Spleen (tissue), 13 donors: ENCODE measurements at regions of chr19 and their contacts with region 1.

Region 1: DNA sequence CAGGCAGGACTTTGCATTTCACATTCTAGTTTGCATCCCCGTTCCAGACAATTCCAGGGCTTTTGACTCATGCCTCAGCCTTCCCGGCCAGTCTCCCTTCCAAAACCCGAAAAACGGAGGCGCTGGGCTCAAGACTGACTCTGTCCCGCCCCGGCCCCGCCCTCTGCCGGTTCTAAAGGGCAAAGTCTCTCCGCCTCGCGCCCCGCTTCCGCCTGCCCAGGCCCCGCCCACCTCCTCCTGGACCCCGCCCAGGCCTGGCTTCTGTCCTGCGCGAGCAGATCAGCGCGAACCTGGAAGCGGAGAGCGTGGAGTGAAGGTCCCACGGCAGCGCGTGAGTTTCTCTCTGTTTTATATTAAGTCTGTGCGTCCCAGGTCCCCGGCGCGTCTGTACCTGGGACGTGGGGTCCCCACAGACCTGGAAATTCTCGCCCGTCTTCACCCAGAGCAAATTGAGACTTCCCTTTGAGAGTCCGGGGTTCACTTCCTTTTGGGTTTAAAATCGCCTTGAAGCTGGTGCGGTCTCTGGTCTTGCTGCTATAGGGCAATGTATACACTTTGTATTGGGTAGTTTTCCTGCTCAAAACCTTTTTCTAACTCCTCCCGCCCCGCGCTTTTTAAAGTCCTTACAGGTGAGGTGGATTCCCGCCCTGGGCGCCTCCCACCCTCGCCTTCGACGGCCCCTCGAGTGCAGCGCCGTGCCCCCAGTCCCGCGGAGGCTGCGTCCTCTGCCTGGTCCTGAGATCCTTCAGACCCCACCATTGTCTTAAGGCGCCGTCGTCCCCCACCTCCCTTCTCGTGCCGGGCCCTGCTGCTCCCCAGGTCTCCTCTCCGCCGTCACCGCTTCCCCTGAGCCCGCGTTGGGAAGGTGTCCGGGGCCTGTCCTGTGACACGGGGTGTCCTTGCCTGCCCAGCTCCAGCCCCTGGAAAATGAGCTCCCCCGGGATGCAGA is 31.2 kb downstream of the ZNF701 start:
- DNase-seq: peak; percentile 98
- H3K4me3 ChIP-seq: peak overlapping the region; percentile 64 to 86 (median 74)
- H3K27ac ChIP-seq: peak overlapping the region; percentile 32 to 87 (median 81)
- H3K4me1 ChIP-seq: peaks cover 0 to 31% (median 19%) of the 10 kb centered on the region in 6 donors
- H3K27me3 ChIP-seq: no peaks in the 10 kb centered on the region
- CTCF ChIP-seq: peak in 9 of 11 experiments; percentile 43 to 84 (median 64)
- POLR2A ChIP-seq: no peak

Region 2: GRCh38 chr19:52637718-52638585 is 36.7 kb after region 1 on chr19 and contains the start of gene ZNF83:
- intact Hi-C with region 1: loop called (anchors 5 kb)
- DNase-seq: peak; percentile 98
- H3K4me3 ChIP-seq: peak within 1 kb of the TSS; percentile 41 to 80 (median 70)
- H3K27ac ChIP-seq: peak within 1 kb of the TSS; percentile 89 to 93 (median 92)
- H3K4me1 ChIP-seq: peaks cover 4 to 35% (median 18%) of the 10 kb centered on the region in 6 donors
- H3K27me3 ChIP-seq: no peaks in the 10 kb centered on the region
- CTCF ChIP-seq: no peak
- POLR2A ChIP-seq: peak in 2 of 3 donors; percentile 10 to 61
- total RNA-seq, gene ZNF83: 31.8 to 87.7 (median 65.9) TPM

Region 3: GRCh38 chr19:52690369-52691214 is 89.3 kb after region 1 on chr19:
- intact Hi-C with region 1: loop called (anchors 10 kb)
- DNase-seq: peak; percentile 98
- H3K4me3 ChIP-seq: peak overlapping the region; percentile 39 to 72 (median 64)
- H3K27ac ChIP-seq: peak overlapping the region; percentile 83 to 94 (median 90)
- H3K4me1 ChIP-seq: peaks cover 0 to 45% (median 24%) of the 10 kb centered on the region in 6 donors
- H3K27me3 ChIP-seq: no peaks in the 10 kb centered on the region
- CTCF ChIP-seq: peak in 7 of 11 experiments; percentile 20 to 62 (median 46)
- POLR2A ChIP-seq: peak in 1 of 3 donors; percentile 76